Transverse colon (tissue), 4 donors: ENCODE measurements at regions of chr18 and their contacts with region 1.

Region 1: GRCh38 chr18:27382567-27383216 is 197.6 kb upstream of the CHST9 start:
- DNase-seq: no peak
- H3K4me3 ChIP-seq: no peak overlapping the region
- H3K27ac ChIP-seq: no peak overlapping the region
- H3K4me1 ChIP-seq: no peaks in the 10 kb centered on the region
- H3K27me3 ChIP-seq: no peaks in the 10 kb centered on the region
- CTCF ChIP-seq: no peak
- EP300 ChIP-seq: no peak
- POLR2A ChIP-seq: no peak

Region 2: GRCh38 chr18:27331606-27332005 is 51.1 kb before region 1 on chr18:
- in situ Hi-C with region 1: no loop called
- intact Hi-C with region 1: loop called (anchors 2 kb)
- DNase-seq: no peak
- H3K4me3 ChIP-seq: no peak overlapping the region
- H3K27ac ChIP-seq: no peak overlapping the region
- H3K4me1 ChIP-seq: no peaks in the 10 kb centered on the region
- H3K27me3 ChIP-seq: no peaks in the 10 kb centered on the region
- CTCF ChIP-seq: no peak
- EP300 ChIP-seq: no peak
- POLR2A ChIP-seq: no peak

Region 3: GRCh38 chr18:27528925-27529521 is 146.3 kb after region 1 on chr18:
- in situ Hi-C with region 1: no loop called
- intact Hi-C with region 1: no loop called
- DNase-seq: no peak
- H3K4me3 ChIP-seq: no peak overlapping the region
- H3K27ac ChIP-seq: no peak overlapping the region
- H3K4me1 ChIP-seq: no peaks in the 10 kb centered on the region
- H3K27me3 ChIP-seq: no peaks in the 10 kb centered on the region
- CTCF ChIP-seq: no peak
- EP300 ChIP-seq: no peak
- POLR2A ChIP-seq: no peak

Region 4: GRCh38 chr18:27803957-27804356 is 421.3 kb after region 1 on chr18:
- in situ Hi-C with region 1: no loop called
- intact Hi-C with region 1: no loop called
- DNase-seq: no peak
- H3K4me3 ChIP-seq: no peak overlapping the region
- H3K27ac ChIP-seq: no peak overlapping the region
- H3K4me1 ChIP-seq: no peaks in the 10 kb centered on the region
- H3K27me3 ChIP-seq: no peaks in the 10 kb centered on the region
- CTCF ChIP-seq: no peak
- EP300 ChIP-seq: no peak
- POLR2A ChIP-seq: no peak